Naive thymus-derived CD4-positive, alpha-beta T cell (primary cell): ENCODE measurements at regions of chr3 and their contacts with region 1.

Region 1: GRCh38 chr3:42804106-42804830 is at the start of gene HIGD1A:
- DNase-seq: peak; percentile 82 to 93 (median 90)
- ATAC-seq: peak; percentile 100
- H3K4me3 ChIP-seq: peak within 1 kb of the TSS; percentile 91
- H3K4me3 Mint-ChIP-seq: peak within 1 kb of the TSS; percentile 93 to 99 (median 98)
- H3K27ac ChIP-seq: peak within 1 kb of the TSS; percentile 88
- H3K27ac Mint-ChIP-seq: peak within 1 kb of the TSS; percentile 84 to 97 (median 94)
- H3K4me1 ChIP-seq: peaks cover 9 to 16% of the 10 kb centered on the region in 2 donors
- H3K4me1 Mint-ChIP-seq: peaks cover 33 to 60% (median 44%) of the 10 kb centered on the region in 7 donors
- H3K27me3 ChIP-seq: no peaks in the 10 kb centered on the region
- H3K27me3 Mint-ChIP-seq: peaks cover 0 to 36% (median 4%) of the 10 kb centered on the region in 5 donors
- total RNA-seq, gene HIGD1A: 15.3 to 65.9 (median 23.6) TPM

Region 2: GRCh38 chr3:42276141-42277132 is 527.8 kb before region 1 on chr3:
- CTCF ChIA-PET with region 1: no interaction called
- POLR2A ChIA-PET with region 1: no interaction called
- intact Hi-C with region 1: no loop called
- DNase-seq: no peak
- ATAC-seq: no peak
- H3K4me3 ChIP-seq: no peak overlapping the region
- H3K4me3 Mint-ChIP-seq: no peak overlapping the region
- H3K27ac ChIP-seq: no peak overlapping the region
- H3K27ac Mint-ChIP-seq: no peak overlapping the region
- H3K4me1 ChIP-seq: no peaks in the 10 kb centered on the region
- H3K4me1 Mint-ChIP-seq: no peaks in the 10 kb centered on the region
- H3K27me3 ChIP-seq: no peaks in the 10 kb centered on the region
- H3K27me3 Mint-ChIP-seq: no peaks in the 10 kb centered on the region

Region 3: GRCh38 chr3:42590989-42591756 is 213.1 kb before region 1 on chr3:
- CTCF ChIA-PET with region 1: no interaction called
- POLR2A ChIA-PET with region 1: no interaction called
- intact Hi-C with region 1: loop called in 1 of 2 experiments (anchors 5 kb)
- DNase-seq: no peak
- ATAC-seq: peak; percentile 26
- H3K4me3 ChIP-seq: peak overlapping the region; percentile 55
- H3K4me3 Mint-ChIP-seq: peak overlapping the region; percentile 84 to 100 (median 94)
- H3K27ac ChIP-seq: peak overlapping the region; percentile 77
- H3K27ac Mint-ChIP-seq: peak overlapping the region; percentile 59 to 100 (median 94)
- H3K4me1 ChIP-seq: peaks cover 13 to 14% of the 10 kb centered on the region in 2 donors
- H3K4me1 Mint-ChIP-seq: peaks cover 8 to 47% (median 38%) of the 10 kb centered on the region in 7 donors
- H3K27me3 ChIP-seq: no peaks in the 10 kb centered on the region
- H3K27me3 Mint-ChIP-seq: no peaks in the 10 kb centered on the region

Region 4: DNA sequence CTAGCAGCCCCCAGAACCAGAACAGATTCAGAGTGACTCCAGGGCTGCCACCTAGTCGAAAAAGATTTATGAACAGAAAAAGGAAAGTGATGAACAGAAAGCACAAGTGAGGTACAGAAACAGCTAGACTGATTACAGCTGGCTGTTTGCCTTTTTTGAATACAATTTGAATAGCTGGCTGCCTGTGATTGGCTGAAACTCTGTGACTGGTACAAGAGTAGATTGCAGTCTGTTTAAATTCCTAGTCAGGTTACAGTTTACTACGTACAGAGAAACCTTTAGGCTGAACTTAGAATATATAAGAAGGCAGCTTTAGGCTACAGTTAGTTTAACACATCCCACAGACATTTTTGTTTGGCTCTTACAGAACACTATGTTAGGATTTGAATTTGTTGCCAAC is 41.2 kb before region 1 on chr3:
- CTCF ChIA-PET with region 1: no interaction called
- POLR2A ChIA-PET with region 1: no interaction called
- intact Hi-C with region 1: no loop called
- DNase-seq: no peak
- ATAC-seq: no peak
- H3K4me3 ChIP-seq: no peak overlapping the region
- H3K4me3 Mint-ChIP-seq: no peak overlapping the region
- H3K27ac ChIP-seq: no peak overlapping the region
- H3K27ac Mint-ChIP-seq: peak overlapping the region in 1 of 9 donors; percentile 33
- H3K4me1 ChIP-seq: no peaks in the 10 kb centered on the region
- H3K4me1 Mint-ChIP-seq: peaks cover 0 to 7% (median 0%) of the 10 kb centered on the region in 7 donors
- H3K27me3 ChIP-seq: no peaks in the 10 kb centered on the region
- H3K27me3 Mint-ChIP-seq: peaks cover 0 to 27% (median 0%) of the 10 kb centered on the region in 5 donors

Region 5: DNA sequence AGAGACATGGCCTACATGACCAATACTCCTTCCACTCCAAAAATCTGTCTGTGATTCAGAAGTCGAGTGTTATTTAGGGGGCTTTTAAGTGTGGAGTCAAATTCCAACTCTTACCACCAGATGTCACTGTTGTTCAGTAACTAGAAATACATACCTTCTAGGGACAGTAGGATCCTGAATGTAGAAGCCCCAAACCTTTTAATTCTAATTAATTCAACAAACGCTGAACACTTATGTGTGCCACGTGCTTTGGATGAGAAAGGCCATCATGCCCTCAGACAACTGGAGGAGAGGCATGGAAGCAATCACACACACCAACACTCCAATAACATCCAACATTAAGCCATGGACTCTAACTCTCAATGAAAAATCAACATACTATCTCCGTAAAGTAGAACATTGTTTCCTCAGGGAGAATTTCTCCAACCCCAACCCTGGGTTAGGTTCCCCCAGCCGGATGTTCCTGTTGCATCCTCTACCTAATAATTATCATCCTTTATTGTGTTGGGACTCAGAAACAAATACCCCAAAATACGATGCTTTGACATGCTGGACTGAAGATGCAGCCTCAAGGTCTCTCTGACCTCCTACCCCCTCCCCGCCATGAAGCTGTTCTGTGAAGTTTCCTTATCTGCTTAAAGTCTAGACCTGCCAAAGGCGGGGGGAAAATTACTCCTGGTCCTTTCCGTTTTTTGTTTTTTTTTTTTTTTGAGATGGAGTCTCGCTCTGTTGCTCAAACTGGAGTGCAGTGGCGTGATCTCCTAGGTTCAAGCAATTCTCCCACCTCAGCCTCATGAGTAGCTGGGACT is 23.2 kb before region 1 on chr3:
- CTCF ChIA-PET with region 1: interaction called, 4 read pairs
- POLR2A ChIA-PET with region 1: no interaction called
- intact Hi-C with region 1: loop called in 1 of 2 experiments (anchors 2 kb)
- DNase-seq: peak in 7 of 9 donors; percentile 41 to 67 (median 54)
- ATAC-seq: peak; percentile 87
- H3K4me3 ChIP-seq: no peak overlapping the region
- H3K4me3 Mint-ChIP-seq: no peak overlapping the region
- H3K27ac ChIP-seq: no peak overlapping the region
- H3K27ac Mint-ChIP-seq: peak overlapping the region in 2 of 9 donors; percentile 14
- H3K4me1 ChIP-seq: no peaks in the 10 kb centered on the region
- H3K4me1 Mint-ChIP-seq: peaks cover 0 to 5% (median 0%) of the 10 kb centered on the region in 7 donors
- H3K27me3 ChIP-seq: no peaks in the 10 kb centered on the region
- H3K27me3 Mint-ChIP-seq: no peaks in the 10 kb centered on the region

Region 6: DNA sequence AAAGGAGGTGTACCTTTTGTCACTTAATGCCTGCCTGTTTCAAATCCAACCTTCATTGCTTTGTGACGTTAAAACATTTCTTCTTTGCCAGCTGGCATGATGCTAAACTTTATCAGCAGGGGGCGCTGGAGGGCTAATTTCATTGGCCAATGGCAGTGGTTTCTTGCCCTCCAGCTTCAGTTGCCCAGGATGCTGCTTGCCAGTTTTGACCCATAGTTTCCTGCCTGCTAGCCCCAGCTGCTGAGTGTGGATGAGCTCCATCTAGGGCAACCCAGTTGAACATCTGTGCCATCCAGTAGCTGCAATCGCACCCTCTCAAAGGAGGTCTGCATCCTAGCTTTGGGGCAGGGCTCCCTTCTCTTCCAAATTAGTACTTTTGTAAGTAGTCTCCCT is 27.0 kb after region 1 on chr3:
- CTCF ChIA-PET with region 1: interaction called, 3 read pairs
- POLR2A ChIA-PET with region 1: no interaction called
- intact Hi-C with region 1: loop called (anchors 2 kb)
- DNase-seq: peak; percentile 45 to 71 (median 65)
- ATAC-seq: peak; percentile 81
- H3K4me3 ChIP-seq: no peak overlapping the region
- H3K4me3 Mint-ChIP-seq: no peak overlapping the region
- H3K27ac ChIP-seq: no peak overlapping the region
- H3K27ac Mint-ChIP-seq: peak overlapping the region in 1 of 9 donors; percentile 12
- H3K4me1 ChIP-seq: no peaks in the 10 kb centered on the region
- H3K4me1 Mint-ChIP-seq: peaks cover 0 to 14% (median 5%) of the 10 kb centered on the region in 7 donors
- H3K27me3 ChIP-seq: no peaks in the 10 kb centered on the region
- H3K27me3 Mint-ChIP-seq: peaks cover 0 to 18% (median 4%) of the 10 kb centered on the region in 5 donors

Region 7: GRCh38 chr3:42880601-42881451 is 76.6 kb after region 1 on chr3:
- CTCF ChIA-PET with region 1: no interaction called
- POLR2A ChIA-PET with region 1: interaction called, 3 read pairs
- intact Hi-C with region 1: loop called (anchors 1 kb)
- DNase-seq: peak; percentile 66 to 87 (median 83)
- ATAC-seq: peak; percentile 99
- H3K4me3 ChIP-seq: peak overlapping the region; percentile 64
- H3K4me3 Mint-ChIP-seq: peak overlapping the region; percentile 76 to 89 (median 85)
- H3K27ac ChIP-seq: peak overlapping the region; percentile 57
- H3K27ac Mint-ChIP-seq: peak overlapping the region; percentile 55 to 97 (median 82)
- H3K4me1 ChIP-seq: peaks cover 4 to 13% of the 10 kb centered on the region in 2 donors
- H3K4me1 Mint-ChIP-seq: peaks cover 6 to 17% (median 15%) of the 10 kb centered on the region in 7 donors
- H3K27me3 ChIP-seq: no peaks in the 10 kb centered on the region
- H3K27me3 Mint-ChIP-seq: peaks cover 0 to 25% (median 0%) of the 10 kb centered on the region in 5 donors

Region 8: DNA sequence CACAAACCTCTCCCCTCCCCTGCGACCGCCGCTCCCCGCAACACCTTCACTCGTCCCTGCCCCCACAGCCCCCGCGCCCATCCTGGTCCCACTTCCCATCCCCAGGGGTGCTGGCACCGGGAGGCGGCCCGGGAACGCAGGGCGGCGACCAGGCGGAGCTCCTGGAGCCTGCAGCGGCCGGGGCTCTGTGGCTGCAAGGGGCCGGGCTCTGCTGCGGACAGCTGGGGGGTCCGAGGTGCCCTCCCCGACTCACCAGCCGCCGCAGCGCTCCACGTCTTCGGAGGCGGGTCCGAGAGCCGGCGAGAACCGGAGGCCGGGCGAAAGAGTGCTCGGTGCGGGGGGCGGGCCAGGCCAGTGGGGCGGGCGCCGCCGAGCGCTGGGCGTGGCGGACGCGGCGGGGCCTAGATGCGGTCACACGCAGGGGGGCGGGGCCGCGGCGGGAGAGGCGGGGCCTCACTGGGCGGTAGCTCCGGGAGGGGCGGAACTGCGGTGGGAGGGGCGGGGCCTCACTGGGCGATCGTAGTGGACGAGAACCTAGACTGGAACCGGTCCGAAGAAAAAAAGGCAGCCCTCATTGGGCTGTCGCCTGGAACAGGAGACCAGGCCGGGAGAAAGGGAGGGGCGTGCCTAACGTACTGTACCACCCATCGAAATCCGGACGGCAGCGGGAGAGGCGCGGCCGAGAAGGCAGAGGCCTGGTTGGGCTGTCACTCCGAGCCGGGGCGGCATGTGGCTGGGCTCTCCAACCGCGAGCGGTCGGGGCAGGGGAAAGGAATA is 817.6 kb after region 1 on chr3 and contains the start of gene ANO10:
- CTCF ChIA-PET with region 1: no interaction called
- POLR2A ChIA-PET with region 1: no interaction called
- intact Hi-C with region 1: loop called (anchors 5 kb)
- DNase-seq: peak; percentile 82 to 99 (median 91)
- ATAC-seq: peak; percentile 97
- H3K4me3 ChIP-seq: peak within 1 kb of the TSS; percentile 84
- H3K4me3 Mint-ChIP-seq: peak within 1 kb of the TSS; percentile 82 to 94 (median 91)
- H3K27ac ChIP-seq: peak within 1 kb of the TSS; percentile 60
- H3K27ac Mint-ChIP-seq: peak within 1 kb of the TSS; percentile 68 to 92 (median 86)
- H3K4me1 ChIP-seq: peaks cover 11 to 15% of the 10 kb centered on the region in 2 donors
- H3K4me1 Mint-ChIP-seq: peaks cover 8 to 26% (median 23%) of the 10 kb centered on the region in 7 donors
- H3K27me3 ChIP-seq: no peaks in the 10 kb centered on the region
- H3K27me3 Mint-ChIP-seq: peaks cover 0 to 15% (median 0%) of the 10 kb centered on the region in 5 donors
- total RNA-seq, gene ANO10: 6.1 to 13.6 (median 9.3) TPM